PC-3 (cell line): ENCODE measurements at regions of chr6 and their contacts with region 1.

Region 1: GRCh38 chr6:27518881-27519795 is 46.2 kb upstream of the ZNF184 start:
- DNase-seq: peak; percentile 96
- ATAC-seq: peak; percentile 73
- H3K4me3 ChIP-seq: peak overlapping the region; percentile 89
- H3K27ac ChIP-seq: peak overlapping the region; percentile 31; the same call in 1 of the 2 replicates
- H3K4me1 ChIP-seq: peaks cover 5% of the 10 kb centered on the region; the same call in 1 of the 2 replicates
- H3K27me3 ChIP-seq: no peaks in the 10 kb centered on the region
- CTCF ChIP-seq: peak; percentile 88

Region 2: GRCh38 chr6:27312146-27312949 is 206.8 kb before region 1 on chr6 and contains the start of gene POM121L2:
- CTCF ChIA-PET with region 1: interaction called, 3 read pairs
- POLR2A ChIA-PET with region 1: no interaction called
- intact Hi-C with region 1: loop called (anchors 1 kb)
- DNase-seq: peak; percentile 92
- ATAC-seq: peak; percentile 82
- H3K4me3 ChIP-seq: peak within 1 kb of the TSS; percentile 89
- H3K27ac ChIP-seq: no peak within 1 kb of the TSS
- H3K4me1 ChIP-seq: no peaks in the 10 kb centered on the region
- H3K27me3 ChIP-seq: no peaks in the 10 kb centered on the region
- CTCF ChIP-seq: peak; percentile 81
- total RNA-seq, gene POM121L2: not detected in 2 replicates

Region 3: GRCh38 chr6:27503436-27504030 is 15.6 kb before region 1 on chr6:
- CTCF ChIA-PET with region 1: interaction called, 4 read pairs
- POLR2A ChIA-PET with region 1: interaction called, 6 read pairs
- intact Hi-C with region 1: loop called (anchors 1 kb)
- DNase-seq: peak; percentile 91
- ATAC-seq: peak; percentile 25
- H3K4me3 ChIP-seq: peak overlapping the region; percentile 86
- H3K27ac ChIP-seq: peak overlapping the region; percentile 11; the same call in 1 of the 2 replicates
- H3K4me1 ChIP-seq: peaks cover 8% of the 10 kb centered on the region; the same call in 1 of the 2 replicates
- H3K27me3 ChIP-seq: no peaks in the 10 kb centered on the region
- CTCF ChIP-seq: no peak

Region 4: GRCh38 chr6:27608916-27609883 is 90.1 kb after region 1 on chr6:
- CTCF ChIA-PET with region 1: interaction called, 20 read pairs
- POLR2A ChIA-PET with region 1: interaction called, 3 read pairs
- intact Hi-C with region 1: loop called (anchors 1 kb)
- DNase-seq: peak; percentile 86
- ATAC-seq: peak; percentile 89
- H3K4me3 ChIP-seq: peak overlapping the region; percentile 39; the same call in 1 of the 2 replicates
- H3K27ac ChIP-seq: peak overlapping the region; percentile 49
- H3K4me1 ChIP-seq: peaks cover 7% of the 10 kb centered on the region
- H3K27me3 ChIP-seq: no peaks in the 10 kb centered on the region
- CTCF ChIP-seq: peak; percentile 90